CD4-positive, alpha-beta T cell (primary cell): ENCODE measurements at regions of chr6 and their contacts with region 1.

Region 1: GRCh38 chr6:90478789-90479602 is 107.9 kb downstream of the MAP3K7 start:
- DNase-seq: peak; percentile 64 to 92 (median 78)
- ATAC-seq: peak; percentile 99
- H3K4me3 ChIP-seq: no peak overlapping the region
- H3K4me3 Mint-ChIP-seq: peak overlapping the region; percentile 58
- H3K27ac ChIP-seq: no peak overlapping the region
- H3K27ac Mint-ChIP-seq: peak overlapping the region; percentile 66
- H3K4me1 ChIP-seq: peaks cover 18% of the 10 kb centered on the region
- H3K4me1 Mint-ChIP-seq: peaks cover 34% of the 10 kb centered on the region
- H3K27me3 ChIP-seq: no peaks in the 10 kb centered on the region
- H3K27me3 Mint-ChIP-seq: no peaks in the 10 kb centered on the region
- CTCF ChIP-seq: peak; percentile 89

Region 2: GRCh38 chr6:89371849-89372505 is 1107.0 kb before region 1 on chr6:
- CTCF ChIA-PET with region 1: no interaction called
- POLR2A ChIA-PET with region 1: no interaction called
- intact Hi-C with region 1: loop called in 1 of 2 experiments (anchors 5 kb)
- DNase-seq: peak; percentile 64 to 89 (median 76)
- ATAC-seq: peak; percentile 65
- H3K4me3 ChIP-seq: no peak overlapping the region
- H3K4me3 Mint-ChIP-seq: no peak overlapping the region
- H3K27ac ChIP-seq: peak overlapping the region in 1 of 2 donors; percentile 32
- H3K27ac Mint-ChIP-seq: peak overlapping the region; percentile 79
- H3K4me1 ChIP-seq: peaks cover 17% of the 10 kb centered on the region
- H3K4me1 Mint-ChIP-seq: peaks cover 27% of the 10 kb centered on the region
- H3K27me3 ChIP-seq: no peaks in the 10 kb centered on the region
- H3K27me3 Mint-ChIP-seq: no peaks in the 10 kb centered on the region
- CTCF ChIP-seq: peak; percentile 97

Region 3: DNA sequence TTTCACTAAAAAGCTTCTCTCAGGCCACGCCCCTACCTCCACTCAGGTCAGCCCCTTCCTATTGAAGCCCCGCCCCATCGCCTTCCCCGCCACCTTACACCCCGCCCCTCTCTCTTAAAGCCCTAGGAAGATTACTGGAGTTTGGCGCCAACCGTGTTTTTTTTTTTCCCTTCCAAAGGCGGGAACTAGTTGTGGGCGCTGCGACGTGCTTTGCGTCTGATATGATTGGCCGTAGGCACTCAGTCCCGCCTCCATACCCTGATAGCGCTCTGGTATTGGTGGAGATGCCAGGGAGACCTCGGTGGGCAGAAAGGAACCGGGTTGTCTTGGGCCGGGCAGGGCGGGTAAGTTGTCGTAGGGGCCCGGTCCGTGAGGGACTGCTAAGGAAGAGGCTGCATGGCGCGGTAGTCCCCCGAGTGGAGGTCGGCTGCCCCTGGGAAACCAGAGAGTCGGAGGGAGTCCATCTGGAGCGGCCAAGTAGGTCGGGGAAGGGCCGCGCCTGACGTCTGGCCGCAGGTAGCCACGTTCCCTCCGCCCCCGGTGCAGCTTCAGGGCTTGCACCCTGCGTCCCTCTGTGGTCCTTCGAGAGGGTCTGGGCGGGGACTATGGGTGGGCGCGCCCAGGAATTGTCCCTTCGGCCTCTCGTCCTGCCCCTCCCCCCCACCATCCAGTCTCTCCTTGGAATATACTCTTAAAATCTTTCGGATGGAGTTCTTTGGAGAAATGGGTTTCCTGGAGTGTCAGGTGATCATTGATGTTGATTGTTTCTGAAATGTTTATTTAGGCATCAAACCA is 649.2 kb before region 1 on chr6 and contains the start of gene CASP8AP2:
- CTCF ChIA-PET with region 1: interaction called, 10 read pairs
- POLR2A ChIA-PET with region 1: no interaction called
- intact Hi-C with region 1: no loop called
- DNase-seq: peak; percentile 86 to 99 (median 92)
- ATAC-seq: peak; percentile 93
- H3K4me3 ChIP-seq: peak within 1 kb of the TSS; percentile 100
- H3K4me3 Mint-ChIP-seq: peak within 1 kb of the TSS; percentile 94
- H3K27ac ChIP-seq: peak within 1 kb of the TSS; percentile 68 to 86
- H3K27ac Mint-ChIP-seq: peak within 1 kb of the TSS; percentile 91
- H3K4me1 ChIP-seq: peaks cover 33% of the 10 kb centered on the region
- H3K4me1 Mint-ChIP-seq: peaks cover 35% of the 10 kb centered on the region
- H3K27me3 ChIP-seq: no peaks in the 10 kb centered on the region
- H3K27me3 Mint-ChIP-seq: no peaks in the 10 kb centered on the region
- CTCF ChIP-seq: no peak
- total RNA-seq, gene CASP8AP2: 17.3 to 20.0 TPM

Region 4: GRCh38 chr6:90080876-90081481 is 398.0 kb before region 1 on chr6:
- CTCF ChIA-PET with region 1: interaction called, 4 read pairs
- POLR2A ChIA-PET with region 1: no interaction called
- intact Hi-C with region 1: loop called in 1 of 2 experiments (anchors 10 kb)
- DNase-seq: peak; percentile 31 to 85 (median 54)
- ATAC-seq: peak; percentile 80
- H3K4me3 ChIP-seq: peak overlapping the region; percentile 52
- H3K4me3 Mint-ChIP-seq: peak overlapping the region; percentile 93
- H3K27ac ChIP-seq: peak overlapping the region; percentile 57 to 68
- H3K27ac Mint-ChIP-seq: peak overlapping the region; percentile 92
- H3K4me1 ChIP-seq: peaks cover 35% of the 10 kb centered on the region
- H3K4me1 Mint-ChIP-seq: peaks cover 98% of the 10 kb centered on the region
- H3K27me3 ChIP-seq: no peaks in the 10 kb centered on the region
- H3K27me3 Mint-ChIP-seq: no peaks in the 10 kb centered on the region
- CTCF ChIP-seq: no peak

Region 5: GRCh38 chr6:90393232-90393884 is 85.6 kb before region 1 on chr6:
- CTCF ChIA-PET with region 1: interaction called, 25 read pairs
- POLR2A ChIA-PET with region 1: interaction called, 5 read pairs
- intact Hi-C with region 1: loop called (anchors 1 to 2 kb)
- DNase-seq: peak; percentile 54 to 86 (median 61)
- ATAC-seq: peak; percentile 73
- H3K4me3 ChIP-seq: no peak overlapping the region
- H3K4me3 Mint-ChIP-seq: no peak overlapping the region
- H3K27ac ChIP-seq: no peak overlapping the region
- H3K27ac Mint-ChIP-seq: peak overlapping the region; percentile 6
- H3K4me1 ChIP-seq: peaks cover 22% of the 10 kb centered on the region
- H3K4me1 Mint-ChIP-seq: peaks cover 34% of the 10 kb centered on the region
- H3K27me3 ChIP-seq: no peaks in the 10 kb centered on the region
- H3K27me3 Mint-ChIP-seq: no peaks in the 10 kb centered on the region
- CTCF ChIP-seq: peak; percentile 81

Region 6: DNA sequence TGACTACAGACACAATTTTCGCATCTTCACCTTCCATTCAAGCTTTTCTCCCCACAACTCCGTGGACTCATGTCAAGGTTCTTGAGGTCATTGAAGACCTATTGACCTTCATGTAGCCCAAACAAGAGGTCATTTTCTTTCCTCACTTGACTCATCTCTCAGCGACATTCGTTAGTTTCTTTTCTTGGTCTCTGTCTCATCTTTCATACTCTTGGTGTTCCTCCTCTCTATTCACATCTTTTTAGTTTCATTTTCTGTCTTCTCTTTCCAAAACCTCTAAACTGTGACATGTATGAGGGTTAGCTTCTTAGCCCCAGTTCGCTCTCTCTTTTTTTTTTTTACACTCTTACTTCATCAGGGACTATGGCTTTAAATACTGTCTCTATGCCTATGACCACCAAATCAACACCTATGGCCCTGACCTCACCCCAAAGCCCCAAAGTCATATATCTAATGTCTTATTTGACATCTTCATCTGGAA is 53.8 kb before region 1 on chr6:
- CTCF ChIA-PET with region 1: interaction called, 10 read pairs
- POLR2A ChIA-PET with region 1: interaction called, 3 read pairs
- intact Hi-C with region 1: no loop called
- DNase-seq: peak in 4 of 14 experiments; percentile 3 to 76 (median 46)
- ATAC-seq: peak; percentile 79
- H3K4me3 ChIP-seq: peak overlapping the region; percentile 15
- H3K4me3 Mint-ChIP-seq: peak overlapping the region; percentile 64
- H3K27ac ChIP-seq: peak overlapping the region in 1 of 2 donors; percentile 56
- H3K27ac Mint-ChIP-seq: peak overlapping the region; percentile 81
- H3K4me1 ChIP-seq: peaks cover 4% of the 10 kb centered on the region
- H3K4me1 Mint-ChIP-seq: peaks cover 21% of the 10 kb centered on the region
- H3K27me3 ChIP-seq: no peaks in the 10 kb centered on the region
- H3K27me3 Mint-ChIP-seq: no peaks in the 10 kb centered on the region
- CTCF ChIP-seq: no peak